Ascending aorta (tissue), 2 donors: ENCODE measurements at regions of chr13 and their contacts with region 1.

Region 1: GRCh38 chr13:48532506-48533499 is at the start of gene RCBTB2:
- DNase-seq: peak; percentile 91 to 99
- H3K4me3 ChIP-seq: peak within 1 kb of the TSS; percentile 78 to 83
- H3K27ac ChIP-seq: peak within 1 kb of the TSS; percentile 98 to 99
- H3K4me1 ChIP-seq: peaks cover 0 to 6% of the 10 kb centered on the region in 2 donors
- H3K27me3 ChIP-seq: no peaks in the 10 kb centered on the region
- CTCF ChIP-seq: no peak
- total RNA-seq, gene RCBTB2: 1.8 TPM

Region 2: DNA sequence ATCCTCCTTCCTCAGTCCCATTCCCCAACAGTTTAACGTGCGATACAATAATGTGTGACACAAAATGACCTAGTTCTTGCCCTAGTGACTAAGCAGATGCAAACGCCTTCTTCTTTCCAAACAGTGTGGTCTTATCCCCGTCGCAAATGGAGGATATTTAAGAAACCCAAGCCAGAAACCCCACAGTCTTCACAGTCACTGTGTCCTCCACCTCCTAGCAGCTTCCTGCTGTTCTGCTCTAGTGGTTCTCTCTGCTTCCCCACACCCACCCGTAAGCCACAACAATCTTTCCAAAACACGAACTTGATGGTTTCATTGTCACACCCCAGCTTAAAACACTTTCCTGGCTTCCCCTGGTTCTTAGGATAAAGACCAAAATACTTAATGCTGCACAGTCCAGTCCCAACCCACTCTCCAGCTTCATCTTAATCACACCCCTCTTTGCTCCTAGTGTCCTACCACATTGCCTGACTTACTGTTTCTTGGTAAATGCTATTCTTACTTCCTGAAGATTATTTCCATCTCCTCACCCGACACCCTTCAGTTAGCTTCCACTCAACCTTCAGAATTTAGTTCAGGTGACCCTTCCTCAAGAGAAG is 267.5 kb before region 1 on chr13:
- intact Hi-C with region 1: no loop called
- DNase-seq: no peak
- H3K4me3 ChIP-seq: no peak overlapping the region
- H3K27ac ChIP-seq: no peak overlapping the region
- H3K4me1 ChIP-seq: no peaks in the 10 kb centered on the region
- H3K27me3 ChIP-seq: no peaks in the 10 kb centered on the region
- CTCF ChIP-seq: no peak

Region 3: GRCh38 chr13:48400850-48401291 is 131.9 kb before region 1 on chr13:
- intact Hi-C with region 1: loop called (anchors 5 kb)
- DNase-seq: no peak
- H3K4me3 ChIP-seq: no peak overlapping the region
- H3K27ac ChIP-seq: peak overlapping the region; percentile 74
- H3K4me1 ChIP-seq: peaks cover 3 to 40% of the 10 kb centered on the region in 2 donors
- H3K27me3 ChIP-seq: no peaks in the 10 kb centered on the region
- CTCF ChIP-seq: no peak

Region 4: GRCh38 chr13:48437371-48437770 is 95.4 kb before region 1 on chr13:
- intact Hi-C with region 1: loop called (anchors 2 kb)
- DNase-seq: peak; percentile 45 to 82
- H3K4me3 ChIP-seq: peak overlapping the region in 1 of 2 donors; percentile 31
- H3K27ac ChIP-seq: peak overlapping the region; percentile 72 to 75
- H3K4me1 ChIP-seq: peaks cover 5 to 23% of the 10 kb centered on the region in 2 donors
- H3K27me3 ChIP-seq: no peaks in the 10 kb centered on the region
- CTCF ChIP-seq: no peak

Region 5: GRCh38 chr13:48505597-48506091 is 27.2 kb before region 1 on chr13:
- intact Hi-C with region 1: loop called (anchors 1 kb)
- DNase-seq: peak; percentile 49 to 80
- H3K4me3 ChIP-seq: peak overlapping the region in 1 of 2 donors; percentile 51
- H3K27ac ChIP-seq: peak overlapping the region; percentile 86 to 91
- H3K4me1 ChIP-seq: peaks cover 0 to 15% of the 10 kb centered on the region in 2 donors
- H3K27me3 ChIP-seq: no peaks in the 10 kb centered on the region
- CTCF ChIP-seq: no peak

Region 6: GRCh38 chr13:48573213-48574007 is 40.6 kb after region 1 on chr13:
- intact Hi-C with region 1: loop called (anchors 2 kb)
- DNase-seq: no peak
- H3K4me3 ChIP-seq: no peak overlapping the region
- H3K27ac ChIP-seq: no peak overlapping the region
- H3K4me1 ChIP-seq: peaks cover 3 to 11% of the 10 kb centered on the region in 2 donors
- H3K27me3 ChIP-seq: no peaks in the 10 kb centered on the region
- CTCF ChIP-seq: no peak

Region 7: GRCh38 chr13:48930918-48931317 is 398.1 kb after region 1 on chr13:
- intact Hi-C with region 1: no loop called
- DNase-seq: no peak
- H3K4me3 ChIP-seq: no peak overlapping the region
- H3K27ac ChIP-seq: no peak overlapping the region
- H3K4me1 ChIP-seq: no peaks in the 10 kb centered on the region
- H3K27me3 ChIP-seq: no peaks in the 10 kb centered on the region
- CTCF ChIP-seq: no peak